ENCODE measurements at regions of chr5 and their contacts with region 1.

Region 1: GRCh38 chr5:57298295-57298984 is 124.6 kb downstream of the GPBP1 start:
- DNase-seq: peak; percentile 55 to 85
- ATAC-seq: peak; percentile 92
- H3K4me3 ChIP-seq: no peak overlapping the region
- H3K27ac ChIP-seq: peak overlapping the region; percentile 35 to 68; a peak in 4 of 6 replicates
- H3K4me1 ChIP-seq: peaks cover 18% of the 10 kb centered on the region
- CTCF ChIP-seq: peak; percentile 86
- EP300 ChIP-seq: no peak
- POLR2A ChIP-seq: no peak
- RAD21 ChIP-seq: peak; percentile 92 to 93

Region 2: DNA sequence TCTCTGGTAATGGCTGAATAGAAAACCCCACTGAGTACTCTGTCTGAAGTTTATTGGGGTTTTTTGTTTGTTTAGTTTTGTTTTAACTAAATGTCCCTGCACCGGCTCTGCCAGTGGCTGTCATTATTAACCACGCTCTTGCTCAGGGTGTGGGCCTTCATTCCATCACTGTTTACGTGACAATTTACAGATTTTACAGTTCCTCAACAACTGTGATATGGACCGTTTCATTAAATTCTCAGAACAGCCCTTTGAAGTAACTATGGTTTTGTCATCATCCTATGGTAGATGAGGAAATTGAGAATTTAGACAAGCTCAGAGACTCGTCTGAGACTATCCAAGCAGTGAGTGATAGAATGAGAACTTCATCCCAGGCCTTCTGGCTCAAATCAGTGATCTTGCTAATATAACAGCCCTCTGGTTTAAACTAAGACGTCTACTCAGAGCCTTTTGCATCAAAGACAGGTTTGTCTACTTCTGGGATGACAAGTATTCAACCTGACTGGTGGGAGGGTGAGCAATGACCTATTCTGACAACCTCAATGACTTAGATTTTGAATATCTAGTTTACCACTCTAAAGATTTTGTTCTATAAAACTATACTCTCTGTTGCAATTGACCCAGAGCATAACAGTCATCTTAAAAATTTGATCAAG is 560.4 kb before region 1 on chr5:
- CTCF ChIA-PET with region 1: no interaction called
- POLR2A ChIA-PET with region 1: no interaction called
- DNase-seq: no peak
- ATAC-seq: no peak
- H3K4me3 ChIP-seq: no peak overlapping the region
- H3K27ac ChIP-seq: no peak overlapping the region
- H3K4me1 ChIP-seq: no peaks in the 10 kb centered on the region
- CTCF ChIP-seq: no peak
- EP300 ChIP-seq: no peak
- POLR2A ChIP-seq: no peak
- RAD21 ChIP-seq: no peak

Region 3: GRCh38 chr5:57349214-57349613 is 50.8 kb after region 1 on chr5:
- CTCF ChIA-PET with region 1: no interaction called
- POLR2A ChIA-PET with region 1: no interaction called
- DNase-seq: no peak
- ATAC-seq: no peak; a peak in 1 of 6 replicates
- H3K4me3 ChIP-seq: no peak overlapping the region
- H3K27ac ChIP-seq: no peak overlapping the region
- H3K4me1 ChIP-seq: no peaks in the 10 kb centered on the region
- CTCF ChIP-seq: no peak
- EP300 ChIP-seq: no peak
- POLR2A ChIP-seq: no peak
- RAD21 ChIP-seq: no peak

Region 4: GRCh38 chr5:57411982-57412381 is 113.5 kb after region 1 on chr5:
- CTCF ChIA-PET with region 1: interaction called, 17 read pairs
- POLR2A ChIA-PET with region 1: no interaction called
- DNase-seq: no peak
- ATAC-seq: no peak
- H3K4me3 ChIP-seq: no peak overlapping the region
- H3K27ac ChIP-seq: no peak overlapping the region
- H3K4me1 ChIP-seq: no peaks in the 10 kb centered on the region
- CTCF ChIP-seq: no peak
- EP300 ChIP-seq: no peak
- POLR2A ChIP-seq: no peak
- RAD21 ChIP-seq: no peak

Region 5: GRCh38 chr5:57494104-57495098 is 196.0 kb after region 1 on chr5:
- CTCF ChIA-PET with region 1: interaction called, 52 read pairs
- POLR2A ChIA-PET with region 1: no interaction called
- DNase-seq: peak; percentile 54 to 71
- ATAC-seq: peak; percentile 81 to 95; a peak in 5 of 6 replicates
- H3K4me3 ChIP-seq: no peak overlapping the region
- H3K27ac ChIP-seq: peak overlapping the region; percentile 74 to 88
- H3K4me1 ChIP-seq: peaks cover 21% of the 10 kb centered on the region
- CTCF ChIP-seq: no peak
- EP300 ChIP-seq: no peak; a peak in 1 of 5 replicates
- POLR2A ChIP-seq: no peak
- RAD21 ChIP-seq: peak; percentile 20 to 31; a peak in 1 of 5 replicates

Region 6: DNA sequence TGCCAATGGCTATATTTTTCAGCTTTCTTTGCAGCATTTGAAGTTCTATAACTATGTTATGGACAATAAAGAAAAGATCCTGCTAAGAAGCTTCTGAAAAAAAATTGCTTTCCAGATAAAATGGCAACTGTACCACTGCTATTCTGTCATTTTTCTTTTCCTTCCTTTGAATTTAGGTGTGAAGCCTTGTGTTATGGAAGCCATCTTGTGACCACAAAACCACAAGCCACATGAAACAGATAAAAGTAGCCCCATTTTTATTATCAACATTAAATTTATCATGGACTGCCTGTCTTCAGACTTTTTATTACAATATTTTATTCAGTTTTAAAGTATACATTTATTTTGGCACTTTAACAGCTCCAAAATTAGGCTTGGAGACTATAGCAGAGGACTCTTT is 474.1 kb after region 1 on chr5:
- CTCF ChIA-PET with region 1: interaction called, 40 read pairs
- POLR2A ChIA-PET with region 1: no interaction called
- DNase-seq: no peak
- ATAC-seq: no peak
- H3K4me3 ChIP-seq: no peak overlapping the region
- H3K27ac ChIP-seq: no peak overlapping the region
- H3K4me1 ChIP-seq: peaks cover 25% of the 10 kb centered on the region
- CTCF ChIP-seq: no peak
- EP300 ChIP-seq: no peak
- POLR2A ChIP-seq: no peak
- RAD21 ChIP-seq: no peak

Region 7: DNA sequence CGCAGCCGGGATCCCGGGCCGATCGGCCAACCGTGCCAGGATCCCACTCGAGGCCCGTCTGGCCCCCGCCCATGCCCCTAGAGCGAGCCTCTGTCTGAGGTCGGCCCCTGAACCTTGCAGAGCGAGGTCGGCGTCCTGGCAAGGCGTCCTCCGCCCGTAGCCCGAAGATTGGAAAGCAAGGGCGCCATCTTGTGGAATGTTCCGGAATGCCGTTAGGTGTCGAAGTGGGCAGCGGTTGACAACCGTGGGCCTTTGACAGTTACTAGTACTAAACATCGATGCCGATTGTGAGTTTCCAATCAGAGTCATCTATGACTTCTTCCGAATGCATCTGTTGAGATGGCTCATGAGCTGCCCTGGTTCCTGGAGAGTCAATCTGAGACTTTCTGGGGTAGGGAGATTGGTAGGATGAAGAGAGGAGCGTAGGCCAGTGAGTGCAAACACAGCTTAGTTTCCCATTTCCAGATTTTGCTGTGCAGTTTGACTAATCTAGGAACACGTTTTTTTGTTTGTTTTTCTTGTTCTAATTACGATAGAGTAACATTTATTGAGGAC is 1162.4 kb after region 1 on chr5:
- CTCF ChIA-PET with region 1: interaction called, 114 read pairs
- POLR2A ChIA-PET with region 1: interaction called, 10 read pairs
- DNase-seq: peak; percentile 72 to 92
- ATAC-seq: peak; percentile 67 to 79
- H3K4me3 ChIP-seq: peak overlapping the region; percentile 91
- H3K27ac ChIP-seq: peak overlapping the region; percentile 96 to 100
- H3K4me1 ChIP-seq: peaks cover 17% of the 10 kb centered on the region
- CTCF ChIP-seq: peak; percentile 72
- EP300 ChIP-seq: no peak
- POLR2A ChIP-seq: 0 out of 2 replicates have a peak, but pooled peaks have one; percentile 15
- RAD21 ChIP-seq: peak; percentile 96 to 97